ENCODE measurements at regions of chr1 and their contacts with region 1.

Region 1: DNA sequence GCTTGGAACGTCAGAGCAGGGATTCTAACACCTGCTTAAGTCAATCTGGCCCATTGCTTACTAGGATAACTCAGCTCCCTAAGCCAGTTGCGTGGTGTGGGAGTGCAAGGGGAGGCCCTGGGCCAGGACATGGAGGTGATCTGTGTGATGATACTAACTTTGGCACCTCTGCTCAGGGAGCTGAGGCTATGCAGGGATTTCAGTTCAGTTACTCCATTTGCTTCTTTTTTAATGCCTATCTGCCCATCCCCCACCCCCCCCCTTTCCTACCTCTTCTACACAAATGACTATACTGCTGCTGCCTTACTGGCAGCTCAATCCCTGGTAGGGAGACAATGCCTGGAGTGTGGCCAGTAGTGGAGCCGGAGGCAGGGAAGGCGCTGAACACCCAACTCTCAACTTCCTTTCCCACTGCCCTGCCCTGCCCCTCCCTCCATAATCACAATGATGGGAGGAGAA is 19.5 kb downstream of the INKA2 start:
- DNase-seq: no peak
- H3K4me3 ChIP-seq: no peak overlapping the region
- H3K27ac ChIP-seq: peak overlapping the region in 1 of 2 donors; percentile 23
- H3K4me1 ChIP-seq: peaks cover 0 to 29% (median 18%) of the 10 kb centered on the region in 4 donors
- H3K27me3 ChIP-seq: no peaks in the 10 kb centered on the region
- CTCF ChIP-seq: no peak

Region 2: GRCh38 chr1:111656086-111657017 is 63.4 kb before region 1 on chr1:
- intact Hi-C with region 1: no loop called
- DNase-seq: peak in 1 of 2 donors; percentile 48
- H3K4me3 ChIP-seq: no peak overlapping the region
- H3K27ac ChIP-seq: peak overlapping the region; percentile 26 to 36
- H3K4me1 ChIP-seq: peaks cover 0 to 87% (median 25%) of the 10 kb centered on the region in 4 donors
- H3K27me3 ChIP-seq: no peaks in the 10 kb centered on the region
- CTCF ChIP-seq: peak; percentile 58 to 74

Region 3: DNA sequence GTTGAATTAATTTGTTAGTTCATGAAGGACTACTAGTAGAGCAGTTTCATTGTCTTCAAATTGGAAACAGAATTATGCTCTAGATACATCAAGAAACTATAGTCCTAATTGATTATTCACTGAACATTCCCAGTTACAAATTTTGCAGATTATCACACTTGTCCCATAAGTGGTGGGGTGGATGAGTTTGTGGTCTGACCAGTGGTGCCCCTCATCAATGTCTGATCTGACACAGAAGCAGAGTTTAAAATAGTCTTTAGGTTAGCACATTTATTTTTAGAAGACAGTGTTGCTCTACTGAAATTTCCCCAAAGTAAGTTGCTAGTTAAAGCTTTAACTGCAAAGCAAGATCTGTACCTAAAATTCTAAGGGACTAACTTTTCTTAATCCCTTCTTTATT is 23.4 kb before region 1 on chr1:
- intact Hi-C with region 1: no loop called
- DNase-seq: no peak
- H3K4me3 ChIP-seq: no peak overlapping the region
- H3K27ac ChIP-seq: peak overlapping the region in 1 of 2 donors; percentile 35
- H3K4me1 ChIP-seq: peaks cover 0 to 43% (median 6%) of the 10 kb centered on the region in 4 donors
- H3K27me3 ChIP-seq: no peaks in the 10 kb centered on the region
- CTCF ChIP-seq: no peak

Region 4: GRCh38 chr1:111739194-111739924 is 19.7 kb after region 1 on chr1 and contains the start of gene INKA2:
- intact Hi-C with region 1: no loop called
- DNase-seq: peak; percentile 90 to 96
- H3K4me3 ChIP-seq: peak within 1 kb of the TSS; percentile 76 to 90
- H3K27ac ChIP-seq: peak within 1 kb of the TSS; percentile 96 to 99
- H3K4me1 ChIP-seq: peaks cover 0 to 39% (median 23%) of the 10 kb centered on the region in 4 donors
- H3K27me3 ChIP-seq: no peaks in the 10 kb centered on the region
- CTCF ChIP-seq: peak in 1 of 2 experiments; percentile 4

Region 5: DNA sequence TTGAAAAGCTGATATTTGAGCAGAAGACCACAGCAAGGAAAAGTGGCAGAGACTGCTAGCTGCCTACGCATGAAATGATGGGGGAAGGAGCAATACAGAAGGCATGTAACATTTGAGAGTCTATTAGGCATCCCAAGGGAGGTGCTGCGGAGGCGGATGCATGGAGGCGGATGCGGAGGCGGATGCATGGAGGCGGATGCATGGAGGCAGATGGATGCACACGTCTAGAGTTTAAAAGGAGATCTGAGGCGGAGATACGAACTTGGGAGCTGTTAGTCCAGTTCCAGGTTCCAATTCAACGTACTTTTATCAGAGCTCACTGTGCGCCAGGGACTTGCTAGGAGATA is 35.3 kb after region 1 on chr1:
- intact Hi-C with region 1: loop called (anchors 5 kb)
- DNase-seq: peak in 1 of 2 donors; percentile 38
- H3K4me3 ChIP-seq: peak overlapping the region; percentile 86 to 92
- H3K27ac ChIP-seq: peak overlapping the region; percentile 93 to 94
- H3K4me1 ChIP-seq: peaks cover 0 to 22% (median 17%) of the 10 kb centered on the region in 4 donors
- H3K27me3 ChIP-seq: no peaks in the 10 kb centered on the region
- CTCF ChIP-seq: no peak

Region 6: DNA sequence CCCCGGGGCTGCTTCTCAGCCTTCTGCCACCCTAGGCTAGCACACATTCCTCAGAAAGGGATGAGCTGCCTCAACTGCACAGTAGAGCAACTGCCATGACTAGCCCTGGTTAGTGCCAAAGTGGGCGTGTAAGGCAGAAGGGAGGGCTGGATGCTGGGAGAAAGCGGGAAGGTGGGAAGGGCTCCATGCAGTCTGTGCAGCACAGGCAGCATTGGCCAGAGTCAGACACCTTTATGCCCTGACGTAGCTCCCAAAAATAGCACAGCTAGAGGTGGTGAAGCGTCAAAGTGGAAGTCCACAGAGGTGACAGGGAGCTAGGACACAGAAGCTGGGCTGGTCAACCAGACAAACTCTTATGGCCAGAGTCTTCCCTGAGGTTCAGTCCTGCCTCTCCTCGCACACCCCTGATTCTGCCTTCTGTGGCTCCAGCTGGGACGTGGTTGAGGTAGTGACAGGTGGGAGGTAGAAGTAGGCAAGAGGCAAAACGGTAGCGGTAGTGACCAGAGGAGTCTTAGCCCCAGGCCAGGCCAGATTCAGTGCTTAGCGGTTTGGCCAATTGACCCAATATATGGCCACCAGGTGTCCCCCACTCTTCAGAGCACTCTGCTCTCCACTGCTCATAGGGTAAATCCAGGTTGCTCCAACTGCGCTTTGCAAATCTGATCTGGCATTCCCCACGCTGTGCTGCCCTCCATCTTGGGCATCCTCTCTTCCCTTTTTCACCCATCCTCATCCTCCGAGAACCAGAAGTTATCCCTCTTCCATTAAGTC is 81.6 kb after region 1 on chr1:
- intact Hi-C with region 1: no loop called
- DNase-seq: no peak
- H3K4me3 ChIP-seq: no peak overlapping the region
- H3K27ac ChIP-seq: no peak overlapping the region
- H3K4me1 ChIP-seq: no peaks in the 10 kb centered on the region
- H3K27me3 ChIP-seq: no peaks in the 10 kb centered on the region
- CTCF ChIP-seq: peak; percentile 29 to 36

Measured in tibial artery (tissue), 4 donors.